A673 (cell line): ENCODE measurements at regions of chr9 and their contacts with region 1.

Region 1: GRCh38 chr9:98207606-98208005 is 15.2 kb upstream of the CORO2A start:
- DNase-seq: no peak
- H3K4me3 ChIP-seq: no peak overlapping the region
- H3K27ac ChIP-seq: no peak overlapping the region
- H3K4me1 ChIP-seq: no peaks in the 10 kb centered on the region
- H3K27me3 ChIP-seq: no peaks in the 10 kb centered on the region
- CTCF ChIP-seq: no peak

Region 2: GRCh38 chr9:98074115-98074990 is 133.3 kb before region 1 on chr9:
- CTCF ChIA-PET with region 1: no interaction called
- POLR2A ChIA-PET with region 1: no interaction called
- intact Hi-C with region 1: loop called (anchors 5 kb)
- DNase-seq: peak; percentile 76
- H3K4me3 ChIP-seq: no peak overlapping the region
- H3K27ac ChIP-seq: peak overlapping the region; percentile 9
- H3K4me1 ChIP-seq: peaks cover 9% of the 10 kb centered on the region
- H3K27me3 ChIP-seq: no peaks in the 10 kb centered on the region
- CTCF ChIP-seq: peak; percentile 97

Region 3: DNA sequence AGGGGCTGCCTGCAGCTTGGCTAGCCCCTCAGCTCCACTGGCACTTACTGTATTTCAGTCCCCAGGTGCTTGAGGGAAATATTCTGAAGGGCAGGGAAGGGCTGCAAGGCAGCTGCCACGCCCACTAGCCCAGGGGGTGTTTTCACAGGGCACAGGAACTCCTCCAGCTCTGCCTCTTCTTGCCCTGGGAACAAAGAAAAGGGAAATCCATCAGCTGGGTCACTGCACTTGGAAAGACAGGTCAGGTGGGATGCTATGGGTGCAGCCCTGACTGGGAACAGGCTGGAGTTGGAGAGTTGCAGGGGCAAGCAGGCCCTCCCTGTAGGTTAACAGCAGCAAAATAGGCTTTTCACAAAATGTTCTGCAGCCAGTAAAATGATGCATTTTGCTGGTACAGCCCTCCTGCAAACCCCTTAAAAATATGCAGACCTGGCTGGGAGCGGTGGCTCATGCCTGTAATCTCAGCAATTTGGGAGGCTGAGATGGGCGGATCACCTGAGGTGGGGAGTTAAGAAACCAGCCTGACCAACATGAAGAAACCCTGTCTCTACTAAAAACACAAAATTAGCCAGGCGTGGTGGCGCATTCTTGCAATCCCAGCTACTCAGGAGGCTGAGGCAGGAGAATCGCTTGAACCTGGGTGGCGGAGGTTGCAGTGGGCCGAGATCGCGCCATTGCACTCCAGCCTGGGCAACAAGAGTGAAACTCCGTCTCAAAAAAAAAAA is 36.5 kb after region 1 on chr9:
- CTCF ChIA-PET with region 1: interaction called, 15 read pairs
- POLR2A ChIA-PET with region 1: no interaction called
- intact Hi-C with region 1: no loop called
- DNase-seq: no peak
- H3K4me3 ChIP-seq: no peak overlapping the region
- H3K27ac ChIP-seq: no peak overlapping the region
- H3K4me1 ChIP-seq: no peaks in the 10 kb centered on the region
- H3K27me3 ChIP-seq: no peaks in the 10 kb centered on the region
- CTCF ChIP-seq: no peak

Region 4: GRCh38 chr9:98263482-98264357 is 56.1 kb after region 1 on chr9:
- CTCF ChIA-PET with region 1: interaction called, 8 read pairs
- POLR2A ChIA-PET with region 1: no interaction called
- intact Hi-C with region 1: loop called (anchors 1 kb)
- DNase-seq: peak; percentile 85
- H3K4me3 ChIP-seq: no peak overlapping the region
- H3K27ac ChIP-seq: no peak overlapping the region
- H3K4me1 ChIP-seq: no peaks in the 10 kb centered on the region
- H3K27me3 ChIP-seq: no peaks in the 10 kb centered on the region
- CTCF ChIP-seq: peak; percentile 96

Region 5: DNA sequence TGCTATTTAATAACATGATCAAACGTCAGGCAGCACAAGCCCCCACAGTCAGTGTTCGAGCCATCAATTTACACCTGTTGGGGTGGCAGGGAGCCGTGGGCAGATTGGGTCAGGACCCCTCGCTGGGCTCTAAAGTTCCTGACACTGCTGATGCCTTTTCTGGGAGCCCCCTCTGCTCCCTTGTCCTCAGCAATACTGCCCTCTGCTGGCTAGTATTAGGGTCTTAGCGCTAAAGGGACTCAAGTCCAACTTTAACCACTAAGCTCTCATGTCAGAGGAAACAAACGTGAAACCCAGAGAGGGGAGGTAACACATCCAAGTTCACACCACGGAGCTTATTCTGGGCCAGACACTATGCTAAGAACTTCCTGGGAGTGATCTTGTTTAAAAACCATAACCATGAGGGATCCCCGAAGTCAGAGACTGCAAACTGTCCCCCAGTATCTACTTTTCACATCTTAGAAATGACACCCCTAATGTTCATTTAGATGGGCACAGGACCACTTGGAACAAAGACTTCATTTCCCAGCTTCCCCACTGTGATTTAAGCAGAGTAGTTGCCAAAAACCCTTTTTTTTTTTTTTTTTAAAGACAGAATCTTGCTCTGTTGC is 568.3 kb after region 1 on chr9:
- CTCF ChIA-PET with region 1: no interaction called
- POLR2A ChIA-PET with region 1: no interaction called
- intact Hi-C with region 1: loop called (anchors 5 kb)
- DNase-seq: peak; percentile 80
- H3K4me3 ChIP-seq: no peak overlapping the region
- H3K27ac ChIP-seq: no peak overlapping the region
- H3K4me1 ChIP-seq: no peaks in the 10 kb centered on the region
- H3K27me3 ChIP-seq: no peaks in the 10 kb centered on the region
- CTCF ChIP-seq: peak; percentile 81